Gastrocnemius medialis (tissue), 4 donors: ENCODE measurements at regions of chr14 and their contacts with region 1.

Region 1: DNA sequence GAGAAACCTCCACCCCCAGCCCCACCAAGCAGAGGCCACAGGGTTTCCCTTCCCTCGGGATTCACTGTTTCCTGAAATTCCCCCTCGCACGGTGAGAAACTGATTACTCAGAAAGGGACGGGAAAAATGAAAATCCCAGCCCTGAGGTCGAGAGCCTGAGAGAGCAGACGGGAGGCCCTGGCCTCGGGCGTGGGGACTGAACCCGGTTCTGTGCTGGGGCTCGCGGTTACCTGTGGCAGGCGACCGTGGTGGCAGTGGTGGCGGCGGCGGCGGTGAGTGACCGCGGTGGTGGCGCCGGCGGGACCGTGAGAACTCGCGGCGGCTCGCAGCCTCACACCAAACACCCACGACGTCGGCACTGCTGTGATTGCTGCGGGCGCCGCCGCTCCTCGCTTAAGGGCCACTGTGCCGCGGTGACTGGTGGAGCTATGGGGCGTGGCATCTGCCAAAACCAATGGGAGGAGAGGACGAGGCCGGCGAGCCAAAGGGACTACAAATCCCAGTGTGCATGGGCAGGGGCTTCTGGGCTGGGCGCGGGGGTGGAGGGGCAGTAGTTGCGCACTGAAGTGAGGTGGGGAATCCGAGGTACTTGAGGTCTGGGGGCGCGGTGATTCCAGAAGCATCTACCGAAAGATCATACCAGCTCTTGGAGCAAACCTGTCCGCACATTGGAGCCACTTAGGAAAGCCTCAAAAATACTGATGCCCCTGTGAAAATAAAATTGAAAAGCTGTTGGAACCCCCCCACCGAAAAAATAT is at the start of gene LGMN:
- DNase-seq: peak; percentile 97 to 98
- ATAC-seq: peak; percentile 99
- H3K4me3 ChIP-seq: peak within 1 kb of the TSS; percentile 67 to 99 (median 90)
- H3K27ac ChIP-seq: peak within 1 kb of the TSS; percentile 86 to 98 (median 90)
- H3K4me1 ChIP-seq: peaks cover 8 to 13% of the 10 kb centered on the region in 2 donors
- H3K27me3 ChIP-seq: no peaks in the 10 kb centered on the region
- CTCF ChIP-seq: no peak
- POLR2A ChIP-seq: peak; percentile 94 to 99
- total RNA-seq, gene LGMN: 53.5 to 78.5 (median 62.8) TPM

Region 2: DNA sequence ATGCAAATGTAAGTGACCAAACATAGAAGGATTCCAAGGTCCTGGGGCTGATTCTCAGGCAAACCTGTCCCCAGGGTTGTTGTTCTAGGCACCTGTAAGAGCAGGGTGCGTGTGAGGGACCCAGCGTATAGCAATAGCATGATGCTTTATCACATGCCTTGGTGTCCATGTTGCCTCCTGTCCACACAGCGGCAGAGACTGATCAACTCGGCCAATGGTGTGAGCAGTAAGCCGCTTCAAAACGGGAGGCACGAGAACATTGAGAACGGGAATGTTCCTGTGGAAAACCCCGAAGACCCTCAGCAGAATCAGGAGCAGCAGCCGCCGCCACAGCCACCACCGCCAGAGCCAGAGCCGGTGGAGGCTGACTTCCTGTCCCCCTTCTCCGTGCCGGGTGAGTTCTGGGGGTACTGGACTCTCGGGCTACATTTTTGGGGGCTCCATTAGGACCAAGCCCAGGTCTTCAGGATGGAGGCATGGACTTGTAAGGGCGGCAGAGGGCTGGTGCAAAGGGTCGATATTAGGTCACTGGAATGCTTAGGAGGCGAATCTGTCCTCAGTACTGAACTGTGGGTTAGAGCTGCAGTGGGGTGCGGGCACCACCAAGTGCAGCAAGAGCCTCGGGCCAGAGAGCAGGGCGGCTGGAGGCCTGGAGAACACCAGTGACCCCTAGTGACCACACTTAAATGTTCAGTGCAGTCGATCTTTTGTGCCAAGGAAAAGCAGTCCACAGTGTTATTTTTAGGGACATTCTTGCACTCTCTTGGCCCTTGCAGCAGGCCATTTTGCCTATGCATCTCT is 292.0 kb before region 1 on chr14:
- in situ Hi-C with region 1: no loop called
- intact Hi-C with region 1: no loop called
- DNase-seq: no peak
- ATAC-seq: peak; percentile 46 to 72
- H3K4me3 ChIP-seq: no peak overlapping the region
- H3K27ac ChIP-seq: no peak overlapping the region
- H3K4me1 ChIP-seq: peaks cover 0 to 9% of the 10 kb centered on the region in 2 donors
- H3K27me3 ChIP-seq: no peaks in the 10 kb centered on the region
- CTCF ChIP-seq: peak in 4 of 5 experiments; percentile 30 to 60 (median 50)
- POLR2A ChIP-seq: no peak

Region 3: GRCh38 chr14:92712654-92713051 is 35.8 kb before region 1 on chr14:
- in situ Hi-C with region 1: no loop called
- intact Hi-C with region 1: loop called (anchors 5 kb)
- DNase-seq: no peak
- ATAC-seq: no peak
- H3K4me3 ChIP-seq: no peak overlapping the region
- H3K27ac ChIP-seq: no peak overlapping the region
- H3K4me1 ChIP-seq: no peaks in the 10 kb centered on the region
- H3K27me3 ChIP-seq: no peaks in the 10 kb centered on the region
- CTCF ChIP-seq: no peak
- POLR2A ChIP-seq: no peak

Region 4: DNA sequence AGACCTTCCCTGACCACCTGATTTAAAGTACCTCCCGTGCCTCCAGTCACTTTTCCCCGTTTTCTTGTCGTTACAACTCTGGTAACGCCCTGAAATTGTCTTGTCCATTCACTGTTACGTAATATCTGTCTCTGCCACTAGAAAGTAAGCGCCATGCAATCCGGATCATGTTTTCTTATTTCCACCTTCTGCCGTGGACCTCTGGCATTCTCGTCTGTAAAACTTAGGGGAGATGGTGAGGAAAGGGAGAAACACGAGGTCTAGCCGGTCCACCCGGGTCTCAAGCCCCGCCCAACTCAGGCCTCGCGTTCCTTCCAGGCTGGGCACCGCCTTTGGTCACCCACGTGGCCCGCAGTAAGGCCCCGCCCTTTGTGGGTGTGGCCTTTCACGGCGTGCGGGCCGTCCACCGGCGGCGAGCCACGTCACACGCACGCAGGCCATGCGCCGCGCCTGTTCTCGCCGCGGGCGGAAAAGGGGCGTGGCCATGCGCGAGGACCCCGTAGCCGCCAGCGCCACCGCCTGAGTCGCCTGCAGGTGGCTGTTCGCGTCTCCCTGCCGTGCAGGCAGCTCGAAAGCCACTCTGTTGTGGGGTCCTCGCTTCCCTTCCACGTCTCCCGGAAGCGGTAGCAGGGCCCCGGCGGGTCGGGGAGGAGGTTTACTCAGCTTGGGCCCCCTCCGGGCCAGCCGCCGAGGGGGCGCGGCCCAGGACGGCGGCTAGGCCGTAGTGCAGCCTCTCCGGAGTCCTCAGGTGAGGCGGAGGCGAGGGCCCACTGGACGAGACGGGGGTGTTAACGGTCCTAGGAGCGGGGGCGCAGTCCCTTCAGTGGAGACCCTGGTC is 45.5 kb after region 1 on chr14 and contains the start of gene GOLGA5:
- in situ Hi-C with region 1: loop called in 1 of 4 experiments (anchors 5 kb)
- intact Hi-C with region 1: loop called (anchors 1 kb)
- DNase-seq: peak; percentile 95 to 97
- ATAC-seq: peak; percentile 94 to 95
- H3K4me3 ChIP-seq: peak within 1 kb of the TSS; percentile 76 to 95 (median 92)
- H3K27ac ChIP-seq: peak within 1 kb of the TSS; percentile 87 to 92 (median 90)
- H3K4me1 ChIP-seq: peaks cover 15 to 26% of the 10 kb centered on the region in 2 donors
- H3K27me3 ChIP-seq: no peaks in the 10 kb centered on the region
- CTCF ChIP-seq: peak in 4 of 5 experiments; percentile 23 to 33 (median 30)
- POLR2A ChIP-seq: peak; percentile 73 to 83
- total RNA-seq, gene GOLGA5: 27.0 to 34.8 (median 33.8) TPM